Aorta (tissue), 5 donors: ENCODE measurements at regions of chr12 and their contacts with region 1.

Region 1: GRCh38 chr12:45728630-45729232 is 775 bp upstream of the ARID2 start:
- DNase-seq: peak; percentile 98
- ATAC-seq: peak; percentile 93
- H3K4me3 ChIP-seq: peak overlapping the region; percentile 72 to 99
- H3K27ac ChIP-seq: peak overlapping the region; percentile 94 to 97
- H3K4me1 ChIP-seq: no peaks in the 10 kb centered on the region
- H3K27me3 ChIP-seq: no peaks in the 10 kb centered on the region

Region 2: DNA sequence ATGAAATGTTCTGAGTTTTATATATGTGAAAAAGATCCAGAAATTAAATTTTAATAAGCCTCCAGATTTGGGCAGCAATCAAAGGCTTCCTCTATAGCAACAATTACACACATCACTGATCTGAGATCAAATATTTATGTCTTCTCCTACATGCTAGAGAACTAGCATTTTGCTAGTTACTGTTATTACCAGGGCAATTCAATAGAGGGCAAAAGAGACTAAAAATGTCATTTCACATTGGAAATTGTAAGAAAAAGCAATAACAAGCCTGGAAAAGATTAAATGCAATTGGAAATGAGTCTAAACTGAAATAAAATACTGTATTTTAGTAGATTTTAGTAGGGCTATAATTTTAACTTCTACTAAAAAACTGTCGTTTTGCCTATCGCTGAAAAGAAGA is 545.5 kb before region 1 on chr12:
- intact Hi-C with region 1: loop called in 1 of 2 experiments (anchors 10 kb)
- DNase-seq: no peak
- ATAC-seq: no peak
- H3K4me3 ChIP-seq: no peak overlapping the region
- H3K27ac ChIP-seq: no peak overlapping the region
- H3K4me1 ChIP-seq: no peaks in the 10 kb centered on the region
- H3K27me3 ChIP-seq: no peaks in the 10 kb centered on the region

Region 3: GRCh38 chr12:45298716-45299692 is 429.7 kb before region 1 on chr12:
- intact Hi-C with region 1: loop called in 1 of 2 experiments (anchors 10 kb)
- DNase-seq: peak in 1 of 2 donors; percentile 57
- ATAC-seq: no peak
- H3K4me3 ChIP-seq: no peak overlapping the region
- H3K27ac ChIP-seq: peak overlapping the region in 1 of 2 donors; percentile 59
- H3K4me1 ChIP-seq: peaks cover 3 to 16% of the 10 kb centered on the region in 2 donors
- H3K27me3 ChIP-seq: no peaks in the 10 kb centered on the region

Region 4: GRCh38 chr12:45415393-45415817 is 313.3 kb before region 1 on chr12:
- intact Hi-C with region 1: loop called in 1 of 2 experiments (anchors 10 kb)
- DNase-seq: peak; percentile 80 to 82
- ATAC-seq: peak; percentile 91
- H3K4me3 ChIP-seq: no peak overlapping the region
- H3K27ac ChIP-seq: peak overlapping the region in 1 of 2 donors; percentile 90
- H3K4me1 ChIP-seq: peaks cover 3 to 5% of the 10 kb centered on the region in 2 donors
- H3K27me3 ChIP-seq: no peaks in the 10 kb centered on the region

Region 5: GRCh38 chr12:45543906-45544315 is 184.8 kb before region 1 on chr12:
- intact Hi-C with region 1: loop called in 1 of 2 experiments (anchors 5 kb)
- DNase-seq: no peak
- ATAC-seq: peak; percentile 83
- H3K4me3 ChIP-seq: no peak overlapping the region
- H3K27ac ChIP-seq: no peak overlapping the region
- H3K4me1 ChIP-seq: no peaks in the 10 kb centered on the region
- H3K27me3 ChIP-seq: no peaks in the 10 kb centered on the region

Region 6: GRCh38 chr12:45557016-45557415 is 171.7 kb before region 1 on chr12:
- intact Hi-C with region 1: loop called in 1 of 2 experiments (anchors 10 kb)
- DNase-seq: no peak
- ATAC-seq: no peak
- H3K4me3 ChIP-seq: no peak overlapping the region
- H3K27ac ChIP-seq: no peak overlapping the region
- H3K4me1 ChIP-seq: no peaks in the 10 kb centered on the region
- H3K27me3 ChIP-seq: no peaks in the 10 kb centered on the region

Region 7: DNA sequence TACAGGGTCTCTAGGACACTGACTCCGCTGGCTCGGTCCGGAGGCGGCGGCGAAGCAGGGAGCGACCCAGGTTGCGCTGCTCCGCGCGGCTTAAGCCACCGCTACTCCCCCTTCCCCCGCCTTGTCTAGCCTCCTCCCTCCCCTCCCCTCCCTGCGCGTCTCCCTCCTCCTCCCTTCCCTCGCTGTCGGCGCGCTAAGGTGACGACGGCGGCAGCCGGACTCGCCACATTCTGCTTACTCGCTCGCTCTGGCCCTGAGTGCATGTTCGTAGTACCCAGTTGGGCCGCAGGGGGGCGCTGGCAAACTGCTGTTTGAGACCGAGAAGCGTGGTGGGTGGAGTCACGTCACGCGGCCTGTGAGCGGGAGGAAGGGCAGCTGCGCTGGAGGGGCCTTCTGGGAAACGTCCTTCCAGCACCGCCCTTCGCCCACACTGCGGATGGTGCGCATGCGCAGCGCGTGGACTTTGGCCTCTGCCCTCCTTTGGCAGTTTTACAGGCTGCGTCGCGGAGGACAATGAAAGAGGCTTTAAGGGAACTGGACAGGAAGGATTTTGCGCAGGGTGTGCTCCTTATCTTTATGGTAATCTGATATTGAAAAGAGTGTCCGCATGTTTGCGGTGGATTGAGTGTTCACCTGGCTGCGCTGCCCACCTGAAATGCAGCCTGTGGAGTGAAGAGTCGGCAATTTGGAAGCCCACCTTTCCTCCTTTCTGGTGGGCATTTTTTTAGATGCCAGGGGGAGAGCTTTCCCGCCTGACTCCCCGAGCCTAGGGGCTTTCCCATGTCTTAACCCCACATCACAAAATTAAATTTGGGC is 261.9 kb after region 1 on chr12 and contains the start of gene SCAF11:
- intact Hi-C with region 1: loop called in 1 of 2 experiments (anchors 2 kb)
- DNase-seq: peak; percentile 100
- ATAC-seq: peak; percentile 96
- H3K4me3 ChIP-seq: peak within 1 kb of the TSS; percentile 53 to 88
- H3K27ac ChIP-seq: peak within 1 kb of the TSS; percentile 84 to 87
- H3K4me1 ChIP-seq: peaks cover 0 to 5% of the 10 kb centered on the region in 2 donors
- H3K27me3 ChIP-seq: no peaks in the 10 kb centered on the region
- total RNA-seq, gene SCAF11: 146 to 167 TPM

Region 8: DNA sequence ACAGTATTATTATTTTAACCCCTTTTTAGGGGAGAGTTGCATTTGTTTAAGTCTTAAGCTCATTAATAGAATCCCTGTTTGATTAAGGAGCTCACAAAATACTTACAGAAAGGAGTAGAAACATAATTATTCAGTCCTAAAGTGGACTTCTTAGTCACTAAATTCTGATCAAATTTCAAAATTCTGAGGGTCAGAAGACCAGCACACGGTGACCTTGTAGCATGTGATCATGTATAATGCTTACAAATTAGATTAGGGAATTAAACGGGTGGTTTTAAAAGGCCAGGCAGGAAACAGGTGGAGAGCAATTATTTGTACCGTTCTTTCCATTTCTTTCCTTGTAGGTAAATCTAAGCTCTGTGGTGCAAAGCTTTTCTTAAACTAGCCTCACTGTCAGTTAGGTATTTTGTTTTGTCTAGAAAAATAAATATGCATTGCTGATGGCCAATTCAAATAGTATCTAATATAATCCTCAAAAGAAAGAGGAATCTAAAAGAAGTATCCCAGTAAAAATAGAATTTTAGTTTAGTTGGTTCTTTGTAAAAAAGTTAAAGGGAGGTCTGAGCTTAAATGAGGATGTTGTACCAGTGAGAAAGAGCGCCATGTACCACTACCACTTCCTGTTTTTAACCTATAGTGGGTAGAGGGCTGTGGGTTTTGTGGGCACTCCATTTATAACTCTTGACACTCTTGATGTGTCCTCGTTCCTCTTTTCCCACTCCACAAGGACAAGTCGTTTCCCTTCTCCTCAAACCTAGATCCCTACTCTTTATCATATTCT is 489.0 kb after region 1 on chr12:
- intact Hi-C with region 1: no loop called
- DNase-seq: peak in 1 of 2 donors; percentile 48
- ATAC-seq: no peak
- H3K4me3 ChIP-seq: no peak overlapping the region
- H3K27ac ChIP-seq: no peak overlapping the region
- H3K4me1 ChIP-seq: no peaks in the 10 kb centered on the region
- H3K27me3 ChIP-seq: no peaks in the 10 kb centered on the region